Activated naive CD4-positive, alpha-beta T cell treated with anti-CD3 and anti-CD28 coated beads for 36 hours (primary cell): ENCODE measurements at regions of chr9 and their contacts with region 1.

Region 1: GRCh38 chr9:26892251-26893029 is at the start of gene CAAP1:
- DNase-seq: peak; percentile 96
- H3K4me3 Mint-ChIP-seq: peak within 1 kb of the TSS; percentile 99
- H3K27ac Mint-ChIP-seq: peak within 1 kb of the TSS; percentile 100
- H3K4me1 Mint-ChIP-seq: peaks cover 28% of the 10 kb centered on the region
- H3K27me3 Mint-ChIP-seq: no peaks in the 10 kb centered on the region
- total RNA-seq, gene CAAP1: 16.1 to 18.1 TPM

Region 2: GRCh38 chr9:26946753-26947727 is 54.6 kb after region 1 on chr9 and contains the start of gene PLAA:
- CTCF ChIA-PET with region 1: interaction called, 3 read pairs
- intact Hi-C with region 1: loop called (anchors 1 kb)
- DNase-seq: peak; percentile 90
- H3K4me3 Mint-ChIP-seq: peak within 1 kb of the TSS; percentile 89
- H3K27ac Mint-ChIP-seq: peak within 1 kb of the TSS; percentile 97
- H3K4me1 Mint-ChIP-seq: peaks cover 42% of the 10 kb centered on the region
- H3K27me3 Mint-ChIP-seq: no peaks in the 10 kb centered on the region
- total RNA-seq, gene PLAA: 29.9 to 30.6 TPM

Region 3: GRCh38 chr9:26955921-26956859 is 63.8 kb after region 1 on chr9 and contains the start of gene IFT74:
- CTCF ChIA-PET with region 1: interaction called, 4 read pairs
- intact Hi-C with region 1: loop called (anchors 1 kb)
- DNase-seq: peak; percentile 96
- H3K4me3 Mint-ChIP-seq: peak within 1 kb of the TSS; percentile 90
- H3K27ac Mint-ChIP-seq: peak within 1 kb of the TSS; percentile 87
- H3K4me1 Mint-ChIP-seq: peaks cover 25% of the 10 kb centered on the region
- H3K27me3 Mint-ChIP-seq: no peaks in the 10 kb centered on the region
- total RNA-seq, gene IFT74: 7.9 to 9.7 TPM

Region 4: GRCh38 chr9:26975693-26976059 is 83.2 kb after region 1 on chr9:
- CTCF ChIA-PET with region 1: interaction called, 5 read pairs
- intact Hi-C with region 1: loop called (anchors 1 kb)
- DNase-seq: peak; percentile 8
- H3K4me3 Mint-ChIP-seq: no peak overlapping the region
- H3K27ac Mint-ChIP-seq: no peak overlapping the region
- H3K4me1 Mint-ChIP-seq: no peaks in the 10 kb centered on the region
- H3K27me3 Mint-ChIP-seq: no peaks in the 10 kb centered on the region

Region 5: GRCh38 chr9:27117489-27118135 is 225.2 kb after region 1 on chr9:
- CTCF ChIA-PET with region 1: no interaction called
- intact Hi-C with region 1: no loop called
- DNase-seq: no peak
- H3K4me3 Mint-ChIP-seq: no peak overlapping the region
- H3K27ac Mint-ChIP-seq: no peak overlapping the region
- H3K4me1 Mint-ChIP-seq: no peaks in the 10 kb centered on the region
- H3K27me3 Mint-ChIP-seq: peaks cover 4% of the 10 kb centered on the region

Region 6: DNA sequence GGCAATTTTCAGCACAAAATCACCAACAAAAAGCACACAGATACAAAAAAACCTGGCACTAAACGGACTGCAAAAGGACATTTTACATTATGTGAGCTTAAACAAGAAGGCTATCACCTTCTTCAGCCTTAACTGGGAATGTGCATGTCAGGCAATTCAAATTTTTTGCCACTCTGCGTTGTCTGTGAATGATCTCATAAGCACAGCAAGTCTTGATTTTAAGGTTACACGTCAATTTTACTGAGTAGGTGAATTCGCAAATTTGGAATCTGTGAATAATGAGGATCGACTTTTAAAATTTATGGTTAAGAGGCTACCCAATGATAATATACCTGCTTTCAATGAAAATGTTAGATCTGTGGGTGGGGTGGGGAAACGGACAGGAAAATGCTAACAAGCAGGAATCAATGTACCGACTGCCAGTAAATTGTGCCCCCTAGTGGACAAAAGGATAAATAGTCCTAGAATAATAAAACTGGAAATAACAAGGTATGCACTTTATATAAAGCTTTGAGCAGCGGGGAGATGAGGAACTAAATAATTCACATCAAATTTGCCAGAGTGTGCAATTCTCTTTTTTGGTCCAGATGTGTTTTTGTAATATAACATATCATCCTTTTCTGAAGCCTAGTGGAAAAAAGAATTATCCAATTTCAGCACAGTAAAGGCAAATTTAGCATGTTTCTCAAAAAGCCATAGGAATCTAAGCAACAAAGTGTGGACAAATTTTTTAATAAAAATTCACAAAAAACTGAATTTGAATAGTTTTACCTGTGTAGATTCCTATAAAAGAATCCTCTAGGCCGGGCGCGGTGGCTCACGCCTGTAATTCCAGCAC is 384.0 kb after region 1 on chr9:
- CTCF ChIA-PET with region 1: no interaction called
- intact Hi-C with region 1: loop called (anchors 1 kb)
- DNase-seq: peak; percentile 13
- H3K4me3 Mint-ChIP-seq: no peak overlapping the region
- H3K27ac Mint-ChIP-seq: no peak overlapping the region
- H3K4me1 Mint-ChIP-seq: peaks cover 1% of the 10 kb centered on the region
- H3K27me3 Mint-ChIP-seq: peaks cover 6% of the 10 kb centered on the region

Region 7: DNA sequence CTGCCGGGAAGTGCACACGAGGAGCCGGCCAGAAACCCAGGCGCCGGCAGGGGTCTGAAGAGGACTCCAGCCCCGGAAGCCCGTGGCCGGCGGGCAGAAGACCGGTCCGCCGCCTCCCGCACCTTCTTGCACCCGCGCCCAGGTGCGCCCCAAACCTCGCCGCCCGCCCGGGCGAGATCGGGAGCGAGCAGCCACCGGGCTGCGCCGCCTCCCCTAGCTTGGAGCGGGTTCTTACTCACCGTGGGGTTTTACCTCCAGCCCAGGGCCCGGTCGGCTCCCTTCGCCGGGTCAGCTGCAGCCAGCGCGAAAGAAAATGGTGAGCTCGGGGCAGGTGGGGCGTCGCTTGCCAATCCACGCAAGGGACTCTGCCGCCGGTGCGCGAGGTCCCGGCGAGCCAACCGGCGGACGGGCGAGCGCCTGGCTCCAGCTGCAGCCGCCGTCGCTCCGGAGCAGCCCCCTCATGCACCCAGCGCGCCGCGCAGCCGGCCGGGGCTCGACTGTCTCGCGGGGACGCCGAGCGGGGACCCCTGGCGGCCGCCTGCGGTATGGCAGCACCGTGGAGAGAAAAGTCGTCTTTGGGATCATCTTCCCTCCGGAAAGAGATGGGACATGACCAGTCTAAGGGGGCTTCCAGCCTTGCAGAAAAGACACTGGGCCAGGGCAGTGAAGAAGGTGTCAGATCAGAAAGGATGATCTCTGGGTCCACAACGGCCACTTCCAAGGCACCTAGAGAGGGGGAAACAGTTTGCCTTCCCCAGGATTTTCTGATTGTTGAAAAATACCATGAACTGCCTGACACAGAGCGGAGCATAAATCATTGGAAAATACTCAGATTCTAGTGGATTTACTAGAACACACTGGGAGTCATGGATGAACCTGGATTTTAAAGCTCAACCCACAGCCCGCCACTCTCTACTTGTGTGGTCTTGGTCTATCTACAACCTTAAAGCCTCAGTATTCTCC is 637.2 kb after region 1 on chr9 and contains the start of gene MOB3B:
- CTCF ChIA-PET with region 1: no interaction called
- intact Hi-C with region 1: loop called (anchors 1 kb)
- DNase-seq: peak; percentile 80
- H3K4me3 Mint-ChIP-seq: peak within 1 kb of the TSS; percentile 86
- H3K27ac Mint-ChIP-seq: peak within 1 kb of the TSS; percentile 86
- H3K4me1 Mint-ChIP-seq: peaks cover 10% of the 10 kb centered on the region
- H3K27me3 Mint-ChIP-seq: peaks cover 8% of the 10 kb centered on the region
- total RNA-seq, gene MOB3B: 3.0 to 3.2 TPM